Heart left ventricle (tissue), 16 donors: ENCODE measurements at regions of chr3 and their contacts with region 1.

Region 1: DNA sequence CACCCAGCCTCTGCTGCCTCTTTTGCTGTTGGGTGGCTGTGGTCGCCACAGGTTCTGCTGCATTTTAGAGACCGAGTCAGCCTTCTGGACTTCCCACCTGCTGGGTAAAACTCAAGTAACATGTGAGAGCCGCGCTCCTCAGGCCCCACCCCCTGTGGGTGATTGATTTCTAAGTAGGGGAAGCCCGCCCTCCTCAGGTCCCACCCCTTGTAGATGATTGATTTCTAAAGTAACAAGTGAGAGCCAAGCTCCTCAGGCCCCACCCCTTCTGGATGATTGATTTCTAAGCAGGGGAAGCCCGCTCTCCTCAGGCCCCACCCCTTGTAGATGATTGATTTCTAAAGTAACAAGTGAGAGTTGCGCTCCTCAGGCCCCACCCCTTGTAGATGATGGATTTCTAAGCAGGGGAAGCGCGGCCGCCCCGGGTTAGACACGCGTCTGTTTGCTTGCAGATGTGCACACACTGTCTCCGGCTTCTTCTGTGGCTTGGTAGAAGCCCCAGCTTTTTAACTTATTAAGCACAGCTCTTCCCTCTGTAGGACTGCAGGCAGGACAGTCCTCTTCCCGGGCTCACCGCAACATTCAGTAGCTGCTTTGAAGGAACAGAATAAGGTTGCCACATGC is 83.4 kb downstream of the FAM43A start:
- DNase-seq: peak; percentile 91 to 97 (median 92)
- ATAC-seq: peak; percentile 98 to 99 (median 99)
- H3K4me3 ChIP-seq: peak overlapping the region in 10 of 12 donors; percentile 26 to 60 (median 45)
- H3K27ac ChIP-seq: peak overlapping the region in 10 of 12 donors; percentile 6 to 66 (median 49)
- H3K4me1 ChIP-seq: peaks cover 0 to 45% (median 18%) of the 10 kb centered on the region in 12 donors
- H3K27me3 ChIP-seq: no peaks in the 10 kb centered on the region
- CTCF ChIP-seq: peak in 1 of 12 donors; percentile 4
- POLR2A ChIP-seq: no peak

Region 2: DNA sequence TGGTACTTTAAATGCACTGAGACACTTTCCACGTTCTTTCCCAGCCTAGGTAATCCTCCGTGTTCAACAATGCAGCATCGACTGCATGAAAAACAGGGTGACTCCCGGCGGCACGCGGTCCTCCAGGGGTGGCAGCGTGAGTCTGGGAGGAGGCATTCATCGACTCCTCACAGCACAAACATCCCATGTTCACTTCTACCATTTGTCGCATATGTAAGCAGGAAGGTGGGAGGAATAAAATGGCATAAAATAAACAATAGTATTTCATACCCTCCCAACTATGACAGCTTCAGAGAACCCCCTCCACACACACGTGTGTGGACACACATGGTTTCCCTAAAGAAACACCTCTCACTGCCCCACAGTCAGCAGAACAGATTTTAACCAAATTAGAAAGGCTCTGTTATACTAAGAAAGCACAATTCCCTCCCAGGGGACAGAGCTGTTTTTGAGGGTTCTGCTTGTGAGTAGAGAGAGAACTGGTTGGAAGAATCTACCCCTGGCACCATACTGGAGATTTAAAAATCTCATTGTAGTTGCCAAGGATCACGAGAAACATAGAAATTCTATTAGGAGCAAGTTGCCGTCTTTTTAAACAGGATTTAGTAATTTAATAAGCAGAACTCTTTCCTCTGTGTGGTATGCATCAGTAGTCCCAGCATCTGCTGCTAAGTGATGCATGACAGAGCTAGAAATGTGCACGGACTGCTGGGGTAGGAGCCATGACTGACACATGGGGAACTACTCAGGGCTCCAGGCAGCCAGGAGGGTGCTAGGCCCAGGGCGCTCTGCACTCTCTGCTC is 77.5 kb before region 1 on chr3:
- intact Hi-C with region 1: loop called in 8 of 10 experiments (anchors 5 to 10 kb)
- DNase-seq: no peak
- ATAC-seq: no peak
- H3K4me3 ChIP-seq: no peak overlapping the region
- H3K27ac ChIP-seq: peak overlapping the region in 6 of 12 donors; percentile 4 to 34 (median 12)
- H3K4me1 ChIP-seq: peaks cover 0 to 53% (median 42%) of the 10 kb centered on the region in 12 donors
- H3K27me3 ChIP-seq: no peaks in the 10 kb centered on the region
- CTCF ChIP-seq: no peak
- POLR2A ChIP-seq: no peak

Region 3: GRCh38 chr3:194930377-194931204 is 161.5 kb after region 1 on chr3:
- intact Hi-C with region 1: loop called in 1 of 10 experiments (anchors 10 kb)
- DNase-seq: peak in 4 of 5 donors; percentile 49 to 70 (median 58)
- ATAC-seq: peak; percentile 62 to 86 (median 78)
- H3K4me3 ChIP-seq: no peak overlapping the region
- H3K27ac ChIP-seq: peak overlapping the region; percentile 56 to 89 (median 74)
- H3K4me1 ChIP-seq: peaks cover 12 to 58% (median 32%) of the 10 kb centered on the region in 12 donors
- H3K27me3 ChIP-seq: no peaks in the 10 kb centered on the region
- CTCF ChIP-seq: no peak
- POLR2A ChIP-seq: no peak

Region 4: DNA sequence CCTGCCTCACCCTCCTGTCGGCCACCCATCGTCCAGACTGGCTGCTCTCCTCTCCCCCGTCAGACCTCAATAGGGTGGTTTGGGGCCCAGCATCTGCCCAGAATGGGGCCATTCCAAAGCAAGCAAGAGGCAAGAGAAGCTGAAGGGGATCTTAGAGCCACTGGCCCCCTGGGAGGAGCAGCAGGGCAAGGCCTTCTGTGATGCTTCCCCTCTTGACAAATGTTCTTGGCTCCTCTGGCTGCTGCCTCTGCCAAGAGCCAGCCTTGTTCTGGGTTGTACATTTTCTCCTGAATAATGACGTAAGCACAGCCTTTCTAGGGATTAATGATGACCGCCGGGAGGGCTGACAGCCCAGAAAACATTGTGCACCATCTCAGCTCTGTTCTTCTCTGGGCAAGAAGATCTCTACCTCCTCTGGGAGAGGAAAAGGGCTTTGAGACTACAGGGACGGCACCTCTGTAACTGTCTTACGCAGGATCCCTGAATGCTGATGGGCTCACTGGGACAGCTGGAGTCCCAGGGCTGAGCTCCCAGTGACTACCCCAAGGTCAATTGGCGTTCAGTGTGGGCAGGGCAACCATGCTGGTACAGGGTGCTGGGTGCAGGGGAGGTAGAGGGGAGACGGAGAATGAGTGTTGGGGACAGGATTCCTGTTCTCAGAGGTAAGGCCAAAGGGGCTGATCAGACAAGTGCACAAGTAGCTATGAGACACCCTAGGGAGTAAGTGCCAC is 169.8 kb after region 1 on chr3:
- intact Hi-C with region 1: loop called in 2 of 10 experiments (anchors 2 to 10 kb)
- DNase-seq: peak in 2 of 5 donors; percentile 59
- ATAC-seq: peak; percentile 58 to 85 (median 63)
- H3K4me3 ChIP-seq: no peak overlapping the region
- H3K27ac ChIP-seq: peak overlapping the region in 3 of 12 donors; percentile 13 to 51 (median 15)
- H3K4me1 ChIP-seq: peaks cover 0 to 20% (median 7%) of the 10 kb centered on the region in 12 donors
- H3K27me3 ChIP-seq: no peaks in the 10 kb centered on the region
- CTCF ChIP-seq: no peak
- POLR2A ChIP-seq: no peak